A549 (cell line): ENCODE measurements at regions of chr3 and their contacts with region 1.

Region 1: DNA sequence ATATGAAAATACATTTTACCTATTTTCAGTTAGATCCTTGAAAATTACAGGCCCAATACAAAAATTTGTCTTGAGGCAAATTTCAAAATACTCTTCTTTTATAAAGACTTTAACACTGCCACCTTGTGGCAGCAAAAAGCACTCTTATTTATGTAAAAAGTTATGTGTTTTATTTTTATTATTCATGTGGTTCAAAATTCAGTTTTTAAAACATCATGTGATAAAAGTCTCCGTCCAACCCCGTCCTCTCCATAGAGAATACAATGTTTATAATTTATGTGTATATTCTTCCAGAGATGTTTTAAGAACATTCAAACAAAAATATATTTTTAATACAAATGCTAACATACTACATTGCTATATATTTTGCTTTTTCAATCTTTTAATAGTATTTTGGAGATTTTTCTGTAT is 36.9 kb upstream of the TRIM59 start:
- DNase-seq: peak in 1 of 2 experiments; percentile 57
- ATAC-seq: no peak
- H3K4me3 ChIP-seq: peak overlapping the region; percentile 39; the same call in 2 of the 3 replicates
- H3K27ac ChIP-seq: no peak overlapping the region; a peak in 1 of 6 replicates
- H3K4me1 ChIP-seq: 0 out of 3 replicates have a peak, but pooled peaks cover 2% of the 10 kb centered on the region
- CTCF ChIP-seq: peak; percentile 71
- EP300 ChIP-seq: no peak
- POLR2A ChIP-seq: no peak
- RAD21 ChIP-seq: peak; percentile 55 to 68

Region 2: GRCh38 chr3:160460033-160460432 is 26.4 kb before region 1 on chr3:
- CTCF ChIA-PET with region 1: interaction called, 11 read pairs
- POLR2A ChIA-PET with region 1: no interaction called
- DNase-seq: no peak
- ATAC-seq: peak in 1 of 2 experiments; percentile 47; a peak in 3 of 6 replicates
- H3K4me3 ChIP-seq: no peak overlapping the region
- H3K27ac ChIP-seq: no peak overlapping the region
- H3K4me1 ChIP-seq: no peaks in the 10 kb centered on the region
- CTCF ChIP-seq: no peak
- EP300 ChIP-seq: no peak
- POLR2A ChIP-seq: no peak
- RAD21 ChIP-seq: no peak